Activated T-helper 1 cell treated with anti-CD3 and anti-CD28 coated beads, Interleukin-12 subunit alpha, Interleukin-12 subunit beta, Interleukin-2, Interleukin-4 antibody, amounts not matched to agents 30 ng/mL and 10 ng/mL and 1 ng/mL, durations not matched to agents 14 hours and 24 hours and 36 hours (primary cell): ENCODE measurements at regions of chr22 and their contacts with region 1.

Region 1: DNA sequence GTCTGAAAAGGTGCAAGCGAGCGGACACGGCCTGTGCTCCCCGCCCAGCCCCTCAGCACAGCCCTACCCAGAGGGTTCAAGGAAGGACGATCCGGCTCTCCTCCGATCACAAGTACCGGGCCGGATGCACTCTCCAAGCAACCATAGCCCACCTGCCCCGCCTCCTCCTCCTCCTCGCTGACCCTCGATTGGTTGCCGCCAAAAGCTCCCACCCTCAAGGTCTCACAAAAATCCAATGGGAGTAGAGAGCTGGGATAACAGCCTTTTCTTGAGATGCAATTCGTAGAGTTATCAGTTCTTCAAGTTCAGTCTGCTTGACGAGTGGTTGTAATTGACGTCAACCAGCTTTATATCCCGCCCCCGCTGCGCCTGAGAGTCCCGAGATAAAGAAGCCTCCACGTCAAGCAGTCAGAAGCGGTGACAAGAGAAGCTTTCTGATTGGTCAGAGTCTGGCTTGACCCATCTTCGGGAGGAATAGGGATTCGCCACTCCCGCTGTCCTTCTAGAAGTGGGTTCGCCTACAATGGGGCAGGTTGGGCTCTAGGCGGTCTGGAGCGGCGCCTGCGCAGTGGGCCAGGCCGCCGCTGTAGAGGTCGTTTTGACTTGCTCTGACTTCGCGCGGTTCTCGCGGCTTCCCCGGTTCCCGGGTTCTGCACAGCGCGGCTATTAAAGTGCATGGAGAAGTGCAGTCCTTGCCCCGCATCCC is at the start of gene IFT27:
- DNase-seq: peak; percentile 97
- H3K4me3 Mint-ChIP-seq: peak within 1 kb of the TSS; percentile 92
- H3K27ac Mint-ChIP-seq: peak within 1 kb of the TSS; percentile 94
- H3K4me1 Mint-ChIP-seq: peaks cover 36% of the 10 kb centered on the region
- H3K27me3 Mint-ChIP-seq: no peaks in the 10 kb centered on the region
- total RNA-seq, gene IFT27: 26.0 and 30.9 TPM in 2 replicates

Region 2: GRCh38 chr22:36528795-36529751 is 247.0 kb before region 1 on chr22 and contains the start of gene EIF3D:
- intact Hi-C with region 1: loop called (anchors 1 kb)
- DNase-seq: peak; percentile 99
- H3K4me3 Mint-ChIP-seq: peak within 1 kb of the TSS; percentile 96
- H3K27ac Mint-ChIP-seq: peak within 1 kb of the TSS; percentile 99
- H3K4me1 Mint-ChIP-seq: peaks cover 24% of the 10 kb centered on the region
- H3K27me3 Mint-ChIP-seq: peaks cover 2% of the 10 kb centered on the region
- total RNA-seq, gene EIF3D: 322 and 323 TPM in 2 replicates

Region 3: GRCh38 chr22:36659762-36660509 is 116.2 kb before region 1 on chr22:
- intact Hi-C with region 1: no loop called
- DNase-seq: no peak
- H3K4me3 Mint-ChIP-seq: no peak overlapping the region
- H3K27ac Mint-ChIP-seq: no peak overlapping the region
- H3K4me1 Mint-ChIP-seq: no peaks in the 10 kb centered on the region
- H3K27me3 Mint-ChIP-seq: peaks cover 9% of the 10 kb centered on the region

Region 4: GRCh38 chr22:36757668-36758211 is 18.4 kb before region 1 on chr22:
- intact Hi-C with region 1: loop called (anchors 1 kb)
- DNase-seq: peak; percentile 63
- H3K4me3 Mint-ChIP-seq: no peak overlapping the region
- H3K27ac Mint-ChIP-seq: no peak overlapping the region
- H3K4me1 Mint-ChIP-seq: no peaks in the 10 kb centered on the region
- H3K27me3 Mint-ChIP-seq: peaks cover 8% of the 10 kb centered on the region

Region 5: GRCh38 chr22:37121887-37122591 is 345.9 kb after region 1 on chr22:
- intact Hi-C with region 1: loop called (anchors 5 kb)
- DNase-seq: peak; percentile 93
- H3K4me3 Mint-ChIP-seq: peak overlapping the region; percentile 86
- H3K27ac Mint-ChIP-seq: peak overlapping the region; percentile 100
- H3K4me1 Mint-ChIP-seq: peaks cover 85% of the 10 kb centered on the region
- H3K27me3 Mint-ChIP-seq: peaks cover 2% of the 10 kb centered on the region